Activated CD4-positive, alpha-beta memory T cell treated with anti-CD3 and anti-CD28 coated beads, Interleukin-2, amount 10 ng/mL, durations not matched to agents 7 days and 5 days (primary cell): ENCODE measurements at regions of chr6 and their contacts with region 1.

Region 1: DNA sequence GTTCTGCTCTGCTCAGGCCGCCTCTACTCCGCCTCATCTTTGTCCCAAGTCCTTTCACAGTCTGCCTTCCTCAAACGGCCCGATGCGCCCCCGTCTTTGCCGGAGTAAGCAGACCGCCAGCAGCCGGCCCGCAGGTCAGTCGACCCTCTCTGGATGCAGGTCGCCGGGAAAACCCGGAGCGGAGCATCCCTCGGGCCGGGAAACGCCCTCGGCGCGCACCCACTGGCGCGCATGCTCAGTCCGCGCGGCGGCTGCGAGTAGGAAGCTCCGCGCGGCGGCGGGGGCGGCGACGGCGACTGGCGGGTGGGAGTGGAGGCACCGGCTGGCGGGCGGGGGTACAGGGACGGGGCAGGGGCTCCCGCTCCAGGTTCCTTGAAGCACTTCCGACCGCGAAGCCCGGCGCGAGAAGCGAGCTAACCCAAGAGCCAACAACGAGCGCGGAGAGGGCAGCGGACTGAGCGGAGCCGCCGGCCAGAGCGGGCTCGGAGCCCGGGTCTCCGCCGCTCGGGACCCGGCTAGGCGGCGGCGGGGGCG is at the start of gene LRRC1:
- DNase-seq: peak; percentile 89
- H3K4me3 Mint-ChIP-seq: peak within 1 kb of the TSS; percentile 96
- H3K27ac Mint-ChIP-seq: peak within 1 kb of the TSS; percentile 83
- H3K4me1 Mint-ChIP-seq: peaks cover 34% of the 10 kb centered on the region
- H3K27me3 Mint-ChIP-seq: peaks cover 41% of the 10 kb centered on the region
- total RNA-seq, gene LRRC1: 4.0 to 4.1 TPM

Region 2: GRCh38 chr6:53734473-53735299 is 60.1 kb before region 1 on chr6:
- CTCF ChIA-PET with region 1: interaction called, 16 read pairs
- POLR2A ChIA-PET with region 1: interaction called, 7 read pairs
- DNase-seq: peak; percentile 46
- H3K4me3 Mint-ChIP-seq: no peak overlapping the region
- H3K27ac Mint-ChIP-seq: no peak overlapping the region
- H3K4me1 Mint-ChIP-seq: peaks cover 40% of the 10 kb centered on the region
- H3K27me3 Mint-ChIP-seq: peaks cover 2% of the 10 kb centered on the region

Region 3: DNA sequence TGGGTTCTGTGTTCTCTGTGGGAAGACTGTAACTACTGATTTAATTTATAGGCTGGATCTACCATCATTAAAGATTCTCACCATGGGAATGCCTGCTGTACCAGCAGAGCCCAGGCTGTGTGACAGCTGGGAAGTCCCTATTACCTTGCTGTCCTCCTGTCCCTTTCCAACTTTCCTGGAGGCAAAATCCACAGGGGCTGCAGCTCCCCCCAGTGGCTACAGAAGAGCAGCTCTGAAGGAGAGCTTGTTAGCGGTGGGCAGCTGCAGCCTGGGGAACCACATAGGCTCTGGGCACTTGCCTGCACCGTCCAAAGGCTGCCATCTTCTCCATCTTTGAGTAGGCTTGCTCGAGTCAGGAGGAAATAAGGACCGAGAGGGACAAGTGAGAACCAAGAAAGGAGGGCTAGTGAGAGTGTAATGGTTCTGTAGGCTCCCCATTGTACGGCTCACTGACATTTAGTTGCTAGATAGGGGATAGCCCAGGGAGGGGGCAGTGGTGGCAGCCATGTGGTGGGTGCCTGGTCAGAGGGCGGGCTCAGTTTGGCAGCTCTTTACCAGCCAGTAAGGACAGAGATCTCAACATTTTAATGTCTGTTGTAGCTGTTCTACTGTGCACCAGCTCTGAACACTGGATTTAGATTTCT is 161.4 kb after region 1 on chr6:
- CTCF ChIA-PET with region 1: interaction called, 13 read pairs
- POLR2A ChIA-PET with region 1: no interaction called
- DNase-seq: peak; percentile 18
- H3K4me3 Mint-ChIP-seq: no peak overlapping the region
- H3K27ac Mint-ChIP-seq: no peak overlapping the region
- H3K4me1 Mint-ChIP-seq: no peaks in the 10 kb centered on the region
- H3K27me3 Mint-ChIP-seq: peaks cover 12% of the 10 kb centered on the region